Esophagus muscularis mucosa (tissue), 4 donors: ENCODE measurements at regions of chr3 and their contacts with region 1.

Region 1: GRCh38 chr3:149480325-149481017 is 6.0 kb downstream of the TM4SF4 start:
- DNase-seq: no peak
- H3K4me3 ChIP-seq: no peak overlapping the region
- H3K27ac ChIP-seq: peak overlapping the region; percentile 26 to 37 (median 30)
- H3K4me1 ChIP-seq: peaks cover 6 to 17% (median 11%) of the 10 kb centered on the region in 4 donors
- H3K27me3 ChIP-seq: no peaks in the 10 kb centered on the region
- CTCF ChIP-seq: peak; percentile 50 to 78 (median 54)
- EP300 ChIP-seq: no peak
- POLR2A ChIP-seq: no peak

Region 2: GRCh38 chr3:148955544-148956346 is 524.7 kb before region 1 on chr3:
- intact Hi-C with region 1: loop called (anchors 5 kb)
- DNase-seq: no peak
- H3K4me3 ChIP-seq: no peak overlapping the region
- H3K27ac ChIP-seq: peak overlapping the region; percentile 85 to 93 (median 88)
- H3K4me1 ChIP-seq: peaks cover 2 to 37% (median 31%) of the 10 kb centered on the region in 4 donors
- H3K27me3 ChIP-seq: no peaks in the 10 kb centered on the region
- CTCF ChIP-seq: peak; percentile 58 to 63 (median 63)
- EP300 ChIP-seq: no peak
- POLR2A ChIP-seq: no peak

Region 3: GRCh38 chr3:149114458-149114857 is 366.0 kb before region 1 on chr3:
- intact Hi-C with region 1: loop called (anchors 10 kb)
- DNase-seq: no peak
- H3K4me3 ChIP-seq: no peak overlapping the region
- H3K27ac ChIP-seq: no peak overlapping the region
- H3K4me1 ChIP-seq: peaks cover 5 to 11% (median 9%) of the 10 kb centered on the region in 4 donors
- H3K27me3 ChIP-seq: no peaks in the 10 kb centered on the region
- CTCF ChIP-seq: no peak
- EP300 ChIP-seq: no peak
- POLR2A ChIP-seq: no peak

Region 4: GRCh38 chr3:149273096-149273751 is 207.2 kb before region 1 on chr3:
- intact Hi-C with region 1: loop called (anchors 10 kb)
- DNase-seq: no peak
- H3K4me3 ChIP-seq: no peak overlapping the region
- H3K27ac ChIP-seq: no peak overlapping the region
- H3K4me1 ChIP-seq: peaks cover 0 to 15% (median 11%) of the 10 kb centered on the region in 4 donors
- H3K27me3 ChIP-seq: no peaks in the 10 kb centered on the region
- CTCF ChIP-seq: peak; percentile 92 to 97 (median 95)
- EP300 ChIP-seq: no peak
- POLR2A ChIP-seq: no peak

Region 5: GRCh38 chr3:149352556-149352955 is 127.9 kb before region 1 on chr3:
- intact Hi-C with region 1: loop called (anchors 5 kb)
- DNase-seq: no peak
- H3K4me3 ChIP-seq: no peak overlapping the region
- H3K27ac ChIP-seq: no peak overlapping the region
- H3K4me1 ChIP-seq: peaks cover 5 to 24% (median 11%) of the 10 kb centered on the region in 4 donors
- H3K27me3 ChIP-seq: no peaks in the 10 kb centered on the region
- CTCF ChIP-seq: peak; percentile 43 to 66 (median 51)
- EP300 ChIP-seq: no peak
- POLR2A ChIP-seq: no peak

Region 6: DNA sequence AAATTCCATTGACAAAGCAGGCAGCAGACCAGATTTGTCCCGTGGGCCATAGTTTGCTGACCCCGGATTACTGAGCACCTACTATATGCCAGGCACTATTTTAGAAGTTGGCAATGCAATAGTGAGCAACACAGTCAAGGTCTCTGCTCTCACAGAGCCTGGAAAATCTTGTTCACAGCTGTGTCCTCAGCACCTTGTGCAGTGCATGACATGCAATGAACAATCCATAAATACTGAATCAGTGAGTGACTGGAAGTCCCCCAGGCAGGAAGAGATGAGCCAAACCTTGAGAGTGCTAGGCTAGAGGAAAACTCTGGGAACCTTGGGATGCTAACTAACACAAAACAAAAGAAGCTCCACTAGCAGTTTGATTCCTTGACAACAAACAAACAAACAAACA is 117.4 kb before region 1 on chr3:
- intact Hi-C with region 1: no loop called
- DNase-seq: no peak
- H3K4me3 ChIP-seq: no peak overlapping the region
- H3K27ac ChIP-seq: no peak overlapping the region
- H3K4me1 ChIP-seq: peaks cover 0 to 7% (median 3%) of the 10 kb centered on the region in 4 donors
- H3K27me3 ChIP-seq: no peaks in the 10 kb centered on the region
- CTCF ChIP-seq: no peak
- EP300 ChIP-seq: no peak
- POLR2A ChIP-seq: no peak

Region 7: GRCh38 chr3:149393345-149394160 is 86.9 kb before region 1 on chr3:
- intact Hi-C with region 1: loop called (anchors 2 kb)
- DNase-seq: no peak
- H3K4me3 ChIP-seq: no peak overlapping the region
- H3K27ac ChIP-seq: no peak overlapping the region
- H3K4me1 ChIP-seq: peaks cover 0 to 7% (median 0%) of the 10 kb centered on the region in 4 donors
- H3K27me3 ChIP-seq: no peaks in the 10 kb centered on the region
- CTCF ChIP-seq: peak; percentile 66 to 77 (median 67)
- EP300 ChIP-seq: no peak
- POLR2A ChIP-seq: no peak